Aorta (tissue), 5 donors: ENCODE measurements at regions of chr2 and their contacts with region 1.

Region 1: GRCh38 chr2:101818531-101819451 is 121.3 kb downstream of the MAP4K4 start:
- DNase-seq: no peak
- ATAC-seq: no peak
- H3K4me3 ChIP-seq: no peak overlapping the region
- H3K27ac ChIP-seq: no peak overlapping the region
- H3K4me1 ChIP-seq: peaks cover 2 to 3% of the 10 kb centered on the region in 2 donors
- H3K27me3 ChIP-seq: no peaks in the 10 kb centered on the region

Region 2: GRCh38 chr2:101380376-101380775 is 438.4 kb before region 1 on chr2:
- intact Hi-C with region 1: no loop called
- DNase-seq: peak in 1 of 2 donors; percentile 68
- ATAC-seq: no peak
- H3K4me3 ChIP-seq: no peak overlapping the region
- H3K27ac ChIP-seq: no peak overlapping the region
- H3K4me1 ChIP-seq: no peaks in the 10 kb centered on the region
- H3K27me3 ChIP-seq: no peaks in the 10 kb centered on the region

Region 3: GRCh38 chr2:101766871-101767739 is 51.7 kb before region 1 on chr2:
- intact Hi-C with region 1: loop called in 1 of 2 experiments (anchors 10 kb)
- DNase-seq: no peak
- ATAC-seq: no peak
- H3K4me3 ChIP-seq: no peak overlapping the region
- H3K27ac ChIP-seq: peak overlapping the region in 1 of 2 donors; percentile 48
- H3K4me1 ChIP-seq: peaks cover 21 to 25% of the 10 kb centered on the region in 2 donors
- H3K27me3 ChIP-seq: no peaks in the 10 kb centered on the region

Region 4: DNA sequence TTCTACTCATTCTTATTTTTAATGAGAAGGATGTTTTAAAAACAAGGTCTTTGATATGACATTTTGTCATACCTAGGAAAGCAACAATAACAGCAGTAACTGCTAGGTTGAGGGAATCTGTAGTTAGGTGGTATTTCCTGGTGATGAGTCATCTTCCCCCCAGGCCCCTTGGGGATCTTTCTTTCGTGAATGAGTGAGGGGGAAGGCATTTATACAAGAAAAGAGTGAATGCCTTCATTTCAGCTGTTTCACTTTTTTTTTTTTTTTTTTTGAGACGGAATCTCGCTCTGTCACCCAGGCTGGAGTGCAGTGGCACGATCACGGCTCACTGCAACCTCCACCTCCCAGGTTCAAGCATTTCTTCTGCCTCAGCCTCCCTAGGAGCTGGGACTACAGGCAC is 12.7 kb before region 1 on chr2:
- intact Hi-C with region 1: no loop called
- DNase-seq: no peak
- ATAC-seq: no peak
- H3K4me3 ChIP-seq: no peak overlapping the region
- H3K27ac ChIP-seq: no peak overlapping the region
- H3K4me1 ChIP-seq: peaks cover 0 to 6% of the 10 kb centered on the region in 2 donors
- H3K27me3 ChIP-seq: no peaks in the 10 kb centered on the region